ENCODE measurements at regions of chr9 and their contacts with region 1.

Region 1: DNA sequence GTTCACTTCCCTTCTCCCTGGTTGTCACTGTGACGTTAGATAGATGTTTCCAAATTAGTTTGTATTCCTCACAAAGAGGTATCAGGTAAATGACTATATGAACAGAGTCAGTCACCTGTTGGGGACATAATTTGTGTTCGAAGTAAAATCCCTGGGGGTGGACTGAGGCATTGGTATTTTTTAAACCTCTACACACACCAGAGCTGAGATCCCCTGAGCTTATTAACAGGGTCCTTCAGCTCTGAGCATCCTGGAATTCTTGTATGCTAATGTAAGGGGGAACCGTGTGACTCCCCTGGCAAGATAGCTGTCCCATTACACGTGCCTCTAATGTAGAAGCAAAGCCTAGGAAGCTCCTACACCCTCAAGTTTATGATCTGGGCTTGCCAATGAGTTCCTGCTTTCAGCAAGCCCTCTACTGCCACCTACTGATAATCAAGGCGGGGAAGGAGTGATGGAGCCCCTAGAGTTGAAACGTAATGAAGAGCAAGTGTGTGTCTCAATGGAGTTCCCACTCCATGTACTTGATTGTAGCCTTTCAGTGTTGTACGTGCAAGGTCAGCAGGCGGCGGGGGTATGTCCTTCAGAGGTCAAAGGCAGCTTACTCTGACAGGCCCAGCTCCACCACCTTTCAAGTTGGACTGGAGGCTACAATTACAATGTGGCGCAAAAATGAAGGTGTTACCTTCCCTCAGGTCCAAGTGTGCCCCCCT is 14.4 kb downstream of the PRKACG start:
- DNase-seq: peak; percentile 78
- H3K4me3 ChIP-seq: no peak overlapping the region
- H3K27ac ChIP-seq: no peak overlapping the region
- H3K4me1 ChIP-seq: no peaks in the 10 kb centered on the region
- H3K27me3 ChIP-seq: peaks cover 13% of the 10 kb centered on the region

Region 2: DNA sequence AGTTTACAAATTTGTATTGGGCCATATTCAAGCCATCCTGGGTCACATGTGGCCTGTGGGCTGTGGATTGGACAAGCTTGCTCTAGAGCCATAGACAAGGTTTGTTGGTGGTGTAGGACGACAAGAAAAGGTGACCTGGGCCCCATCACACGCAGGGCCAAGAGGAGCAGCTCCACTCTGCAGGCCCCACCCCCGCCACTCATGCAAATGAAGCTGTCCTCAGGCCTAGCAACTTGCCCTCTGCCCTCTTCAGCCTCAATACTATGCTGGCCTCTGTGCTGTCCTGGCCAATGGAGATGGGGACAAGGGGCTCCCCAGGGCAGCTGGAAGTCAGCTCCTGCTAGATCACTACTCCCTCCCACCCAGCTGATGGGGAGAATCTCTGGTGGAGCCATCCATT is 403.7 kb before region 1 on chr9:
- in situ Hi-C with region 1: loop called (anchors 10 kb)
- DNase-seq: no peak
- H3K4me3 ChIP-seq: no peak overlapping the region
- H3K27ac ChIP-seq: no peak overlapping the region
- H3K4me1 ChIP-seq: no peaks in the 10 kb centered on the region
- H3K27me3 ChIP-seq: no peaks in the 10 kb centered on the region

Region 3: DNA sequence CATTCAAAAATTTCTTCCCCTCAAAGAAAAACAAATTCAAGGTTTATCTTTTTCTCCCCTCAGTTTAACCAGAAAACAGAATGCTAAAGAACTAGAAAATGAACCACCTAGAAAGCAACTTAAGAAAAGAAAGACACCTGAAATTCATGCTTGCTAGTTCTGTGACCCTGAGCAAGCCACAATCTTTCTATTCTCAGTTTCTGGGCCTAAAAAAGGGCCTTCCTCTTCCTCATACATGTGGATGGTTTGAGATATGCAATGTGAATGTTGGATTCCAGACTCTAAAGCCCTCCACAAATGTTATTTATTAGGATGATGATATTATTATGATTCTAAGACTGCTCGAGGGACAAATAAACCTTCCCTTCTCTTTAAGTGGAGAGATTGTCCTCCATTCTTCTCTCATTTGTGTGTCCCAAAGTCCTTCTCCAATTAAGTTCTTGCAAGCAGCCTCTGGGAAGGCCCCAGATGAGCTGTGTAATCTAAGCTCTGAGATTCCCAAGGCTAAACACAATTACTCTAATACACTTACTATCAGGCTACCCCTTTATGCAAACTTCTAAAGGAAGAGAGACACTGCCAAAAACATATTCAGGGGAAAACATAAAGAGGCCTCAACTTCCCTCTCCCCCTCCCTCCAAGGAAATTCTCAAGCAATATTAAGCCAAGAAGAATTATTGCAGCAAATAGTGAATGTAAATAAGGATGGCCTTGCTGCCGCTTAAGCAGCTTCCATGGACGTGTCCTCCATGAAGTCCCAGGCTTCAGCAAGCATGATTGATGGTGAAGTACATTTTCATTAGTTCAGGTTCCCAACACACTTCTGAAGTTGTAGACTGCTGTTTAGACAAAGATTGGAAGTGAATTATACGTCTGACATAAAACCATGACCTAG is 65.9 kb before region 1 on chr9:
- in situ Hi-C with region 1: no loop called
- DNase-seq: no peak
- H3K4me3 ChIP-seq: no peak overlapping the region
- H3K27ac ChIP-seq: no peak overlapping the region
- H3K4me1 ChIP-seq: no peaks in the 10 kb centered on the region
- H3K27me3 ChIP-seq: 0 out of 2 replicates have a peak, but pooled peaks cover 8% of the 10 kb centered on the region

Measured in GM23248 (cell line).